B cell (primary cell): ENCODE measurements at regions of chr19 and their contacts with region 1.

Region 1: GRCh38 chr19:42283143-42284065 is 14.4 kb downstream of the CIC start:
- DNase-seq: peak; percentile 98
- ATAC-seq: peak; percentile 64
- H3K4me3 ChIP-seq: peak overlapping the region; percentile 41 to 72 (median 65)
- H3K4me3 Mint-ChIP-seq: no peak overlapping the region
- H3K27ac ChIP-seq: peak overlapping the region; percentile 91 to 96
- H3K27ac Mint-ChIP-seq: no peak overlapping the region
- H3K4me1 ChIP-seq: peaks cover 53 to 65% of the 10 kb centered on the region in 2 donors
- H3K4me1 Mint-ChIP-seq: peaks cover 37% of the 10 kb centered on the region
- H3K27me3 ChIP-seq: no peaks in the 10 kb centered on the region
- H3K27me3 Mint-ChIP-seq: no peaks in the 10 kb centered on the region
- CTCF ChIP-seq: no peak

Region 2: DNA sequence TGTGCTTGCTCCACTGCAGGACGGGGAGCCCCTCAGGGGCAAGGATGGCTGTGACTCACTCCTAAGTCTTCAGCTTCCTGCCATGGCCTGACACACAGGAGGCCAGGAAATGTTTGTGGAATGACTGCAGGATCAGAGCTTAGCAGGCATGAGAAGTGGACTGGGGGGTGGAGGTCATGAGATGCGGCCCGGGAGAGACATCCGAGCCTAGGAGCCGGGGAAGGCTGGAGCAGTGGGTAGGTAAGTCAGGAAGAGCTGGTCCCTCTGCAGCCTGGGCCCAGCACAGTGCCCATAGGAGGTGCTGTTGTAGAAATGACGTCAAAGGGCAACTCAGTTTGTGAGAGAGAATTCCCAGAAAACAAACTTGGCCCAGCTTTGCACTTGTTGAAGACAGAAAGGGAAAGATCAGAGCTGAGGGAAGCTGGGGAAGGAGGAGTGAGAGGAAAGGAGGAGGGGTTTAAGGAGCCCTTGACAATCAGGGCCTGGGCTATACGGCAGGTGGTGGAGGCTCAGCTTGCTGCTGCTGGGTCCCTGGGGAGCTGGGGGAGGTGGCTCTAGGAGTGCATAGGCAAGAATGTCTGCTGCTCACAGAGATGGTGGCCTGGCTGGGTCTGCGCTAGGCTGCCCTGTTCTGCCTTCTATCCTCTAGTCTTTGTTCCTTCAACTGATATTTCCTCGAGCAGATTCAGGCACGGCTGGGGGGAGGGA is 169.6 kb before region 1 on chr19:
- CTCF ChIA-PET with region 1: interaction called, 25 read pairs
- POLR2A ChIA-PET with region 1: interaction called, 12 read pairs
- intact Hi-C with region 1: loop called (anchors 1 kb)
- DNase-seq: peak; percentile 84
- ATAC-seq: peak; percentile 80
- H3K4me3 ChIP-seq: peak overlapping the region in 4 of 5 experiments; percentile 16 to 49 (median 38)
- H3K4me3 Mint-ChIP-seq: peak overlapping the region; percentile 87
- H3K27ac ChIP-seq: peak overlapping the region; percentile 71 to 79
- H3K27ac Mint-ChIP-seq: peak overlapping the region; percentile 98
- H3K4me1 ChIP-seq: peaks cover 81 to 98% of the 10 kb centered on the region in 2 donors
- H3K4me1 Mint-ChIP-seq: peaks cover 91% of the 10 kb centered on the region
- H3K27me3 ChIP-seq: no peaks in the 10 kb centered on the region
- H3K27me3 Mint-ChIP-seq: no peaks in the 10 kb centered on the region
- CTCF ChIP-seq: no peak

Region 3: DNA sequence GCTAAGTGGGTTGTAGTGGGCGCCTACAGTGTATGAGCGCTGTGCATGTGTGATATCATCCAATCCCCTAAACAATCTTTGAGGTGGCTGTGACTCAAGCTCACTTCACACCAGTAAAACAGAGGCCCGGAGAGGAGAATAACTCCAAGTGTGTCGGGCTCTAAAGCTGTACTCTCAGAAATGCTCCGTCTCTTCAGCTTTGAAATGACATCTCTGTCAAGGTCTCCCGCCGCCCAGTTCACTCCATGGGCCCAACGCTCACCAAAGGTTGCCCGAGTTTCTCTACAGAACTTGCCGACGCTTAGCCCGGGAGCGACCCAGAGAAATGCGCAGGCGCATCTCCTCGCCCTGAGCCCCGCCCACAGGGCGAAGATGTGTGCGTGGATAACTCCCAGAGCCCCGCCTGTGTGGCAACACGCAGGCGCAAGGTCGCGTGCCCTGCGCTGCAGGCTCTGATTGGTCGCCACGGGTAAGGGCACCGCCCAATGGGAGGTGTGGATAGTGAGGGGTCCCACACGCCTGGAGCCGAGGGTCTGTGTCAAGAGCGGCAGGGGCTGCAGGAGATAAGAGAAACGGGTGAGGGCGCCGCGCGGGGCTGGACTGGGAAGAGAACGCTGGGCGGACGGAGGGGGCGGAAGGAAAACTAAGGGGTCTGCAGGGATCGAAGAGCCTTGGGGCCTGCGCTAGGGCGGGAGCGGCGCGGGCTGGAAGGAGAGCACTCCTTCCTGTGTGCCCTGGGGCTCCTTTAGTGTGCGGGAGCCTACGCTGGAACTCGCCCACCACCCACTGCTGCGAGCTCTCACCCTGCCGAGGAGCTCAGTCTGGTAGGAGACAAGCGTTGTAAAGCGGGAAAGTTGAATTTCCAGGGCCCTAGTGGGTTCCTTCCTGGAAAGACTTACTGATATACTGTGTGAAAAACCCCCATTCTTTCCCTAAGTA is 63.3 kb before region 1 on chr19 and contains the start of gene ZNF526:
- CTCF ChIA-PET with region 1: interaction called, 10 read pairs
- POLR2A ChIA-PET with region 1: no interaction called
- intact Hi-C with region 1: loop called (anchors 1 kb)
- DNase-seq: peak; percentile 97
- ATAC-seq: peak; percentile 82
- H3K4me3 ChIP-seq: peak within 1 kb of the TSS; percentile 72 to 96 (median 85)
- H3K4me3 Mint-ChIP-seq: peak within 1 kb of the TSS; percentile 96
- H3K27ac ChIP-seq: peak within 1 kb of the TSS; percentile 66 to 88
- H3K27ac Mint-ChIP-seq: peak within 1 kb of the TSS; percentile 92
- H3K4me1 ChIP-seq: peaks cover 41 to 51% of the 10 kb centered on the region in 2 donors
- H3K4me1 Mint-ChIP-seq: peaks cover 59% of the 10 kb centered on the region
- H3K27me3 ChIP-seq: no peaks in the 10 kb centered on the region
- H3K27me3 Mint-ChIP-seq: no peaks in the 10 kb centered on the region
- CTCF ChIP-seq: no peak
- total RNA-seq, gene ZNF526: 19.0 and 21.3 TPM in 2 replicates

Region 4: GRCh38 chr19:42268704-42269477 is 14.5 kb before region 1 on chr19 and contains the start of gene CIC:
- CTCF ChIA-PET with region 1: interaction called, 33 read pairs
- POLR2A ChIA-PET with region 1: interaction called, 21 read pairs
- intact Hi-C with region 1: loop called (anchors 1 kb)
- DNase-seq: peak; percentile 100
- ATAC-seq: peak; percentile 76
- H3K4me3 ChIP-seq: peak within 1 kb of the TSS; percentile 74 to 95 (median 90)
- H3K4me3 Mint-ChIP-seq: peak within 1 kb of the TSS; percentile 88
- H3K27ac ChIP-seq: peak within 1 kb of the TSS; percentile 98 to 100
- H3K27ac Mint-ChIP-seq: peak within 1 kb of the TSS; percentile 96
- H3K4me1 ChIP-seq: peaks cover 26 to 32% of the 10 kb centered on the region in 2 donors
- H3K4me1 Mint-ChIP-seq: peaks cover 24% of the 10 kb centered on the region
- H3K27me3 ChIP-seq: no peaks in the 10 kb centered on the region
- H3K27me3 Mint-ChIP-seq: no peaks in the 10 kb centered on the region
- CTCF ChIP-seq: no peak
- total RNA-seq, gene CIC: 119 and 123 TPM in 2 replicates

Region 5: GRCh38 chr19:42301656-42302203 is 18.3 kb after region 1 on chr19 and contains the start of gene PRR19:
- CTCF ChIA-PET with region 1: interaction called, 4 read pairs
- POLR2A ChIA-PET with region 1: interaction called, 13 read pairs
- intact Hi-C with region 1: loop called (anchors 1 kb)
- DNase-seq: no peak
- ATAC-seq: peak; percentile 3
- H3K4me3 ChIP-seq: peak within 1 kb of the TSS; percentile 42 to 80 (median 66)
- H3K4me3 Mint-ChIP-seq: peak within 1 kb of the TSS; percentile 91
- H3K27ac ChIP-seq: peak within 1 kb of the TSS in 1 of 2 donors; percentile 3
- H3K27ac Mint-ChIP-seq: peak within 1 kb of the TSS; percentile 78
- H3K4me1 ChIP-seq: peaks cover 17 to 22% of the 10 kb centered on the region in 2 donors
- H3K4me1 Mint-ChIP-seq: peaks cover 25% of the 10 kb centered on the region
- H3K27me3 ChIP-seq: no peaks in the 10 kb centered on the region
- H3K27me3 Mint-ChIP-seq: no peaks in the 10 kb centered on the region
- CTCF ChIP-seq: no peak
- total RNA-seq, gene PRR19: 0.41 and 0.54 TPM in 2 replicates

Region 6: GRCh38 chr19:42313096-42313839 is 29.9 kb after region 1 on chr19 and contains the start of gene TMEM145:
- CTCF ChIA-PET with region 1: no interaction called
- POLR2A ChIA-PET with region 1: no interaction called
- intact Hi-C with region 1: no loop called
- DNase-seq: peak; percentile 61
- ATAC-seq: peak; percentile 67
- H3K4me3 ChIP-seq: peak within 1 kb of the TSS in 3 of 5 experiments; percentile 18 to 38 (median 33)
- H3K4me3 Mint-ChIP-seq: peak within 1 kb of the TSS; percentile 67
- H3K27ac ChIP-seq: no peak within 1 kb of the TSS
- H3K27ac Mint-ChIP-seq: no peak within 1 kb of the TSS
- H3K4me1 ChIP-seq: peaks cover 20 to 26% of the 10 kb centered on the region in 2 donors
- H3K4me1 Mint-ChIP-seq: peaks cover 19% of the 10 kb centered on the region
- H3K27me3 ChIP-seq: peaks cover 0 to 40% (median 17%) of the 10 kb centered on the region in 4 experiments
- H3K27me3 Mint-ChIP-seq: peaks cover 28% of the 10 kb centered on the region
- CTCF ChIP-seq: peak; percentile 13
- total RNA-seq, gene TMEM145: not detected in 2 replicates

Region 7: DNA sequence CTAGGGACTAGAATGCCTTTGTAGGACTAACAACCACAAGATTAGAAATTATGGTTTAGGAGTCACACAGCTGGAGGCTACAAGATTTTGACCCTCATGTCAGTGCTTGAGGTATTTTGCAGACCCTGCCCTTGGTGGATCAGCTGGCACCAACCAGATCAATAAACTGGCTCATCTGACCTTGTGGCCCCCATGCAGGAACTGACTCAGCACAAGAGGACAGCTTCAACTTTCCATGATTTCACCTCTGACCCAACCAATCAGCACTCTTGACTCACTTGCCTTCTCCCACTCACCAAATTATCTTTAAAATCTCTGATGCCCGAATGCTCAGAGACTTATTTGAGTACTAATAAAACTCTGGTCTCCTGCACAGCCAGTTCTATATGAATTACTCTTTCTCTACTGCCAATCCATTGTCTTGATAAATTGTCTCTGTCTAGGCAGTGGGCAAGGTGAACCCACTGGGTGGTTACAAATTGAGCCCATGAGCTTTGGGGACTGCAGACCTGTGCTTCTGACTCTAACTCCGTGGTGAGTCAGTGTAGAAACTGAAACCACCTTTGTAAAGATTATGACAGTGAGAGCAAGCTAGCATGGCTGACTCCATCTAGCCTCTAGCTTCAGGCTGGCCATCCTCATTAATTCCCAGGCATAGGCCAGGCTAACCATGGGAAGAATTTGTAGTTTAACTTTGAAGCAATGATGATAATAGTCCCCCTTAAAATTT is 345.2 kb after region 1 on chr19:
- CTCF ChIA-PET with region 1: no interaction called
- POLR2A ChIA-PET with region 1: no interaction called
- intact Hi-C with region 1: no loop called
- DNase-seq: no peak
- ATAC-seq: no peak
- H3K4me3 ChIP-seq: no peak overlapping the region
- H3K4me3 Mint-ChIP-seq: no peak overlapping the region
- H3K27ac ChIP-seq: no peak overlapping the region
- H3K27ac Mint-ChIP-seq: no peak overlapping the region
- H3K4me1 ChIP-seq: no peaks in the 10 kb centered on the region
- H3K4me1 Mint-ChIP-seq: no peaks in the 10 kb centered on the region
- H3K27me3 ChIP-seq: peaks cover 0 to 8% (median 0%) of the 10 kb centered on the region in 4 experiments
- H3K27me3 Mint-ChIP-seq: peaks cover 46% of the 10 kb centered on the region
- CTCF ChIP-seq: no peak